Thyroid gland (tissue), 4 donors: ENCODE measurements at regions of chr22 and their contacts with region 1.

Region 1: GRCh38 chr22:46006379-46007002 is 29.5 kb upstream of the WNT7B start:
- DNase-seq: peak; percentile 92 to 95
- H3K4me3 ChIP-seq: no peak overlapping the region
- H3K27ac ChIP-seq: peak overlapping the region; percentile 74 to 98 (median 93)
- H3K4me1 ChIP-seq: peaks cover 30 to 64% of the 10 kb centered on the region in 2 donors
- H3K27me3 ChIP-seq: no peaks in the 10 kb centered on the region
- CTCF ChIP-seq: peak; percentile 92 to 98 (median 96)
- POLR2A ChIP-seq: no peak

Region 2: GRCh38 chr22:45925811-45926351 is 80.6 kb before region 1 on chr22:
- intact Hi-C with region 1: no loop called
- DNase-seq: no peak
- H3K4me3 ChIP-seq: no peak overlapping the region
- H3K27ac ChIP-seq: no peak overlapping the region
- H3K4me1 ChIP-seq: peaks cover 0 to 8% of the 10 kb centered on the region in 2 donors
- H3K27me3 ChIP-seq: no peaks in the 10 kb centered on the region
- CTCF ChIP-seq: no peak
- POLR2A ChIP-seq: no peak

Region 3: DNA sequence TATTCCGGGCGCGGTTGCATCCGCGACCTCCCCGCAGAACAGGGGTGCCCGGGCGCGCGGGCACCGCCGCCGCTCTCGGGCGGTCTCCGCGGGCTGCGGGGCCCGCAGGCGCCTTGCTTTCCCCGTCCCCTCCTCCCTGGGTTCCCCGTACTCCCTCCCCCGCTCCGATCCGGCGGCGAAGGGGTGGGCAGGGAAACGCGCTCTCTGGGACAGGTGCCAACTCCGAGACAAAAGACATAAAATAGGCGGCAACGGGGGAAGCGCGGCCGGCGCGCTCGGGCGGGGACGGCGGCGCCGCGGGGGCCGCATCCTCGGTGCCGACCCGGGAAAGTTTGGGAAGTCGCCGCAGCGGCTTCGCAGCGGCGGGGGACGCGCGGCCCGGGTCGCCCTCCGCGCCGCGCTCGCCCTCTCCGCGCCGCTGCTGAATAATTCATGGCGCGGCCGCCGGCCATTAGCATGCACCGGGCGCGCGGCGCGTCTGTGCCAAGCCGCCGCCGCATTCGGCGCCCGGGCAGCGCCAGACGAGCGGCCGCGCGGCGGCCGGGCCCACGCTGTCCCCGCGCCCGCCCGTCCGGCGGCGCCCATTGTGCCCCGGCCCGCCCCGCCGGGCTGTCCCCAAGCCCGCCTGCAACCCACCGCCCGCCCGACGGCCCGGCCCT is 65.1 kb after region 1 on chr22:
- intact Hi-C with region 1: loop called (anchors 5 kb)
- DNase-seq: peak; percentile 88 to 91
- H3K4me3 ChIP-seq: peak overlapping the region; percentile 63 to 83 (median 81)
- H3K27ac ChIP-seq: peak overlapping the region; percentile 95 to 97 (median 97)
- H3K4me1 ChIP-seq: peaks cover 39 to 54% of the 10 kb centered on the region in 2 donors
- H3K27me3 ChIP-seq: no peaks in the 10 kb centered on the region
- CTCF ChIP-seq: no peak
- POLR2A ChIP-seq: peak in 1 of 2 donors; percentile 77